MCF 10A (cell line): ENCODE measurements at regions of chr11 and their contacts with region 1.

Region 1: DNA sequence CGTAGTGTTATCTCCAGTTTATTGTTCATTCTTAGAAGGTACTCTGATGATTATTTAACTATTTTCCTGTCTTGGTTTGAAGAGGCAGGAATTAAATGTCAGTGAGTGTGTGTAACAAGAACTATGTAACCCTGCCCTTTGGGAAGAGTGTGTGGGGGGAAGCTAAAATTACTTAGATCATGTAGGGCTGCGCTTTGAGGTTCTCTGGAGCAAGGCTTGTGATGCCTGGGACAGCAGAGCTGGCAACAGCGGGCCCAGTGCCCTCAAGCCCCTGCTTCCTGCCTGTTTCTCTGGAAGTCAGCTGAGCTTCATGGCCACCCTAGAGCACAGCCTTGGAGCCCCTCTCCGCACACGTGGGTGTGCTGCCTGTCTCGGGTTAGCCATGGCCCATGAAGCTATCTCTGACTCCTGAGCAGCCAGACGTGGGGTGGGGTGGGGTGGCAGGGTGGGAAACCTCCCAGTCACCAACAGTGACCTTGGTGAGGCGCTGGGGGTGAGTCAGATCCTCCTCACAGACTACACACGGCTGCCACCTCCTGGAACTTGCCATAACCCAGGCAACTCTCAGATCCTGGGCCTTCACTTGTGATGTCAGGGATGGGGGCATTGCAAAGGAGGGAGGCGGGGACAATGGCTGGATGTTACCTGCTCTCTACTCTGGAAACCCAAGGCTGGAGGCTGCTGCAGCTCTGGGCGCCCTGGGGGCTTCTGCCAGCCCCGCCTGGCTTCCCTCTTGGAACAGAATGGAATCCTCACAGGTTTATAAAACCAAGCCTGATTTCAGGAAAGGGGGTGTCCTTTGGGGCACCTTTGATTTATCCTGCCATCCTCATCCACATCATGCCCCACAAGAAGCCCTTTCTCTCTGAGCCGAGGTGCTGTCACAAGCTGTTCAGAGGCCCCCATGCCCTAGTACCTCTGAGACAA is 88.6 kb downstream of the SNX19 start:
- DNase-seq: peak; percentile 72
- H3K4me3 Mint-ChIP-seq: no peak overlapping the region
- H3K27ac Mint-ChIP-seq: no peak overlapping the region
- H3K4me1 Mint-ChIP-seq: no peaks in the 10 kb centered on the region
- H3K27me3 Mint-ChIP-seq: no peaks in the 10 kb centered on the region
- CTCF ChIP-seq: peak; percentile 71

Region 2: GRCh38 chr11:130442737-130443136 is 385.0 kb before region 1 on chr11:
- CTCF ChIA-PET with region 1: interaction called, 250 read pairs
- POLR2A ChIA-PET with region 1: no interaction called
- intact Hi-C with region 1: no loop called
- DNase-seq: no peak
- H3K4me3 Mint-ChIP-seq: no peak overlapping the region
- H3K27ac Mint-ChIP-seq: no peak overlapping the region
- H3K4me1 Mint-ChIP-seq: peaks cover 6% of the 10 kb centered on the region
- H3K27me3 Mint-ChIP-seq: no peaks in the 10 kb centered on the region
- CTCF ChIP-seq: no peak

Region 3: DNA sequence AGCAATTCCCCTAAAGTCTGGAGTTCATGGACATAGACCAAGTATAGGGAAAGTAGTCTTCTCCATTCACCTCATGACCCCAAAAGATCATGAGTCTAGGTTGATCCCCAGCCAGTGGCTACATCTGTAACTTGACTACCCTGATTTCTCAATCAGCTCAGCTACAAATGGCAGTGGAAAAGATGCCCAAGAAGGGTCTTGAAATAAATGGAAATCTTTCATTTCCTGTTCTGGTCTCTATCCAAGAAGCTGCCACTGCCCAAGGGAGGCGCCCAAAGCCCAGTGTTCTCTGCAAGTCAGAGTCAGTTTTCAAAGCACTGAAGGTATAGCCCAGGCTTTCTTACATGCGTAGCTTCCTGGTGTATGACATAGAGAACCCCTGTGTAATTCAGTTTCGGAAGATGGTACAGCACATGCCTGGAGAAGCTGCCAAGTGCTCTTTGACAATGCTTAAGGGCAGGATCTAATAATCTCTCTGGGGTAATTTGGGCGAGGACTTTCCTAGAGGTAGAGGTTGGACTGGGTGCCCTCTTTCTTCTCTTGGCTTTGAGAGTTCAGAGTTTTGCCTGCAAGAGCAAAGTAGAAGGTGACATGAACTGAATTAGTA is 278.2 kb before region 1 on chr11:
- CTCF ChIA-PET with region 1: interaction called, 5 read pairs
- POLR2A ChIA-PET with region 1: no interaction called
- intact Hi-C with region 1: loop called (anchors 1 kb)
- DNase-seq: peak; percentile 29
- H3K4me3 Mint-ChIP-seq: no peak overlapping the region
- H3K27ac Mint-ChIP-seq: no peak overlapping the region
- H3K4me1 Mint-ChIP-seq: peaks cover 4% of the 10 kb centered on the region
- H3K27me3 Mint-ChIP-seq: no peaks in the 10 kb centered on the region
- CTCF ChIP-seq: no peak

Region 4: GRCh38 chr11:130636722-130637517 is 190.8 kb before region 1 on chr11:
- CTCF ChIA-PET with region 1: interaction called, 8 read pairs
- POLR2A ChIA-PET with region 1: interaction called, 3 read pairs
- intact Hi-C with region 1: loop called (anchors 5 kb)
- DNase-seq: peak; percentile 90
- H3K4me3 Mint-ChIP-seq: peak overlapping the region; percentile 21
- H3K27ac Mint-ChIP-seq: peak overlapping the region; percentile 78
- H3K4me1 Mint-ChIP-seq: peaks cover 45% of the 10 kb centered on the region
- H3K27me3 Mint-ChIP-seq: no peaks in the 10 kb centered on the region
- CTCF ChIP-seq: no peak

Region 5: DNA sequence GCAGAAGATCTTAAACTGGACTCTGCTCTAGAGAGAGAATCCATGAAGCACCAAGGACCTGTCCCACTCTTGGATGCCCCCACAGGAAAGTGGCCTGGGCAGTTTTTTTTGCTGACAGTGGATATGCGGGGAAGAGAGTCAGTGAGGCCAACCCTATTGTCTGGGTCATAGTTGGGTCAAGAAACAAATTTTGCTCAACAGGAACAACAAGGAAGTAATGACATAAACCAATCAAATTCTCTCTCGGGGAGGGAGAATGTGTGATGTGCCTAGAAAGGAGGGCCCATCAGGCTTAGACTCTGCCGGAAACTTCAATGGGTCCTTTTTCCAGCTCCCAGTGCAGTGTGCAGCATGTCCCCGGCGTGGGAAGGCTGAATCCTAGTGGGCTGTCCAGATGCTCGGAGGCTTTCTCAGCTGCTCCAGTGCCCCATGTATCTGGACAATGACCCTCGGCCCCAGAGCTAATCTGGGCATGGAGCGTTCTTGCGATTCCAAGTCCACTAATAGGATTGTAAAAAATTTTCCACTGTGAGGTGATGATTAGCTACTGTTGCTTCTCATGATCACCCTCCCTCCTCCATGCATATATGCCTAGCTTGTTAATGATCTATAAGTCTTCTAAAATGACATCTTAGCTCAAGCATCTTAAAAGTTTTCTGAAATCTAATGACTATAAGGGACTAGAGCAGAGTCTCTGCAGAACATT is 12.5 kb before region 1 on chr11:
- CTCF ChIA-PET with region 1: interaction called, 12 read pairs
- POLR2A ChIA-PET with region 1: no interaction called
- intact Hi-C with region 1: no loop called
- DNase-seq: no peak
- H3K4me3 Mint-ChIP-seq: no peak overlapping the region
- H3K27ac Mint-ChIP-seq: no peak overlapping the region
- H3K4me1 Mint-ChIP-seq: no peaks in the 10 kb centered on the region
- H3K27me3 Mint-ChIP-seq: peaks cover 19% of the 10 kb centered on the region
- CTCF ChIP-seq: no peak

Region 6: GRCh38 chr11:130839981-130840666 is 12.4 kb after region 1 on chr11:
- CTCF ChIA-PET with region 1: interaction called, 29 read pairs
- POLR2A ChIA-PET with region 1: no interaction called
- intact Hi-C with region 1: no loop called
- DNase-seq: no peak
- H3K4me3 Mint-ChIP-seq: no peak overlapping the region
- H3K27ac Mint-ChIP-seq: no peak overlapping the region
- H3K4me1 Mint-ChIP-seq: no peaks in the 10 kb centered on the region
- H3K27me3 Mint-ChIP-seq: no peaks in the 10 kb centered on the region
- CTCF ChIP-seq: no peak

Region 7: GRCh38 chr11:130847517-130847916 is 19.8 kb after region 1 on chr11:
- CTCF ChIA-PET with region 1: interaction called, 19 read pairs
- POLR2A ChIA-PET with region 1: no interaction called
- intact Hi-C with region 1: no loop called
- DNase-seq: peak; percentile 92
- H3K4me3 Mint-ChIP-seq: peak overlapping the region; percentile 57
- H3K27ac Mint-ChIP-seq: peak overlapping the region; percentile 55
- H3K4me1 Mint-ChIP-seq: peaks cover 18% of the 10 kb centered on the region
- H3K27me3 Mint-ChIP-seq: no peaks in the 10 kb centered on the region
- CTCF ChIP-seq: no peak

Region 8: GRCh38 chr11:131005829-131006228 is 178.1 kb after region 1 on chr11:
- CTCF ChIA-PET with region 1: no interaction called
- POLR2A ChIA-PET with region 1: no interaction called
- intact Hi-C with region 1: no loop called
- DNase-seq: no peak
- H3K4me3 Mint-ChIP-seq: no peak overlapping the region
- H3K27ac Mint-ChIP-seq: no peak overlapping the region
- H3K4me1 Mint-ChIP-seq: peaks cover 21% of the 10 kb centered on the region
- H3K27me3 Mint-ChIP-seq: no peaks in the 10 kb centered on the region
- CTCF ChIP-seq: no peak